ENCODE measurements at regions of chr1 and their contacts with region 1.

Region 1: DNA sequence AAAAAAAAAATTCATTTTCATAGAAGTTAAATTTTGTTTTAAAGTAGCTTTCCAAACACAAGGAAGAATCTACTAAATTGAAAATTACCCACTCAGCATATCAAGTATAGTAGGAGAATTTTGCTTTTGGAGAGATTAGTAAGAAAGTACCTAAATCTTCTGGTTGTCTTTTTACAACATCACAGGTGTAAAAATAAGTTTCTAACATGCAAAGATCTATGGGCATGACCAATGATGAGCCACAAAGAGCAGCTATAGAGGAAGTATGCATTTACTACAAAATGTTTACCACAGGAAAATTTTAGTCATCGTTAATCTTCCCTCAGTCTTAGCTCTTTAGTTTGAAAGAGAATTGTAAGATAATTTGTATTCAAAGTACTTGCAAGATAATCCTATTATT is 28.1 kb downstream of the ANGPTL3 start:
- DNase-seq: no peak
- H3K4me3 ChIP-seq: no peak overlapping the region
- H3K27me3 ChIP-seq: no peaks in the 10 kb centered on the region
- CTCF ChIP-seq: no peak

Region 2: DNA sequence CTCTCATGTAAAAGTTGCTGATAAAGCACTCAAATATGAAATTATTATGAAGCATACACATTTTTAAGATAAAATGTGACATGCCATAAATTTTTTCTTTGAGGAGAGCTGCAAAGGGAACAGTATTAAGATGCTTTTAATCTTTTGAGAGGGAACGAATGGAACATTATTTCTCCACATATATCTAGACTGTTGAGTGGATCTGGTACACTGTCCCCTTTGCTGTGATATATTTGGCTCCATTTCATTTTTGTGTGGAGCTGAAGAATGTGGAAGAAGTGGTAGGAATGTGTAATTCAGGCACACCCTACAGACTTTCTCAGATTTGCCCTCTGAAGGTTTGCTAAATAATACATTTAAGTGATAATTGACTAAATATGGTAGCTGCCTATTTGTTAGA is 999.5 kb after region 1 on chr1:
- CTCF ChIA-PET with region 1: no interaction called
- POLR2A ChIA-PET with region 1: interaction called, 13 read pairs
- DNase-seq: no peak
- H3K4me3 ChIP-seq: no peak overlapping the region
- H3K27me3 ChIP-seq: no peaks in the 10 kb centered on the region
- CTCF ChIP-seq: peak; percentile 44; the same call in 1 of the 2 replicates

Measured in BJ (cell line).